Naive thymus-derived CD4-positive, alpha-beta T cell (primary cell): ENCODE measurements at regions of chr9 and their contacts with region 1.

Region 1: DNA sequence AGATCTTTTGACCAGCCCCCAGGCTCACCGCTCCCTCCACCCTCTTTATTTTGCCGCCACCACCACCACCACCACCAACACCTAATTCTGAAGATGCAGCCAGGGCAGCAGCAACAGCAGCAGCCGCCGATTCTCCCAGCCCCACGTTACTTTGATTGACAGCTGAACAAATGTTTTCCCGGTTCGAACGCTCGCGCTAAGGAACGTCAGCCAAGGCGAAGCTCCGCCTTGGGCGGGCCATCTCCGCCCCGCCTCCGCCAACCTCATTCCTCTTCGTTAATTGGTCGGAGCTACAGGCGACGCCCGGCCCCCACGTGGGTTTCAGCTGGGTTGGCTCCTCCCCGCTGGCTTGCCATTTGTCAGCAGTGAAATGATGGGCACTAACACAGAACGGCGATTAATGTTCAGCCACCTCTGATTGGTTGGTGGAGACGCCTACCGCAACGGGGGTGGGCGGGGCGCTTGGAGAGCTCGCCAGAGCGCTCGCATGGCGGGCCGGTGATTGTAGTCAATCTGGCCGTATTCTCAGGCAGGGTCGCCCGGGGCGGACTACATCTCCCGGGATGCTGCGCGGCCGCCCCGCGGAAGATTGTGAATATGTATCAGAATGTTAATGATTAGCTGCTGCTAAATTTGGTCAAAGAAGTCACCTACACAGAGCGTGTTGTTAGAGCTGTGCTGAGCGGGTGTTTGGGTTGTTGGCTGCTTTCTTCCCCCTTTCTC is at the start of gene TLE4:
- DNase-seq: peak; percentile 96 to 100 (median 100)
- ATAC-seq: peak; percentile 90
- H3K4me3 ChIP-seq: peak within 1 kb of the TSS; percentile 95
- H3K4me3 Mint-ChIP-seq: peak within 1 kb of the TSS in 7 of 10 donors; percentile 59 to 91 (median 78)
- H3K27ac ChIP-seq: peak within 1 kb of the TSS; percentile 87
- H3K27ac Mint-ChIP-seq: peak within 1 kb of the TSS in 4 of 9 donors; percentile 52 to 74 (median 68)
- H3K4me1 ChIP-seq: peaks cover 17 to 19% of the 10 kb centered on the region in 2 donors
- H3K4me1 Mint-ChIP-seq: peaks cover 22 to 40% (median 32%) of the 10 kb centered on the region in 7 donors
- H3K27me3 ChIP-seq: no peaks in the 10 kb centered on the region
- H3K27me3 Mint-ChIP-seq: peaks cover 0 to 34% (median 5%) of the 10 kb centered on the region in 5 donors
- total RNA-seq, gene TLE4: 21.0 to 196 (median 106) TPM

Region 2: DNA sequence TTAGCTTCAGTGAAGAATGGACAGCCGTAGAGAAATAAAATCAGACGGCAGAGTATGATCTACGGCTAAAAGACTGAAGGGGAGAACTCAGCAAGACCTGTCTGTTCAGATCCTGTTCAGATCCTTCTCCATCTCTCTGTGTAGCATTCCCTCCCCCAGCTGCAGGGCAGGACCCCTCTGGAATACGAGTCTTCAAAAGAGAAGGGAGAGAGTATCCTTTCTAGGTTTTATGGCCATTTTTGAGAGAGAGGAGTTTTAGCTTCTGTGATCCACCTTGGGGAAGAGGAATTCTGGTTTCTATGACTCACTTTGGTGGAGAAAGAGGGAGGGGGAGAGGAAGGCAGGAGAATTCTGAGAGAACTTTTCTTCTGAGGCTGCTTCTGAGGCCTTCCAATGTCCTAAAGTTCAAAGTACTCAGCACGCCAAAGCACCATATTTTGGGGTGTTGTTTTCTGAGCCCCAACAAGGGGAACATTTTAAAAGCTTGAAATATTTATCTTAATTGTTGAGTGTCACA is 194.1 kb before region 1 on chr9:
- CTCF ChIA-PET with region 1: no interaction called
- POLR2A ChIA-PET with region 1: no interaction called
- intact Hi-C with region 1: no loop called
- DNase-seq: no peak
- ATAC-seq: no peak
- H3K4me3 ChIP-seq: no peak overlapping the region
- H3K4me3 Mint-ChIP-seq: no peak overlapping the region
- H3K27ac ChIP-seq: no peak overlapping the region
- H3K27ac Mint-ChIP-seq: no peak overlapping the region
- H3K4me1 ChIP-seq: no peaks in the 10 kb centered on the region
- H3K4me1 Mint-ChIP-seq: no peaks in the 10 kb centered on the region
- H3K27me3 ChIP-seq: no peaks in the 10 kb centered on the region
- H3K27me3 Mint-ChIP-seq: peaks cover 2 to 21% (median 5%) of the 10 kb centered on the region in 5 donors

Region 3: DNA sequence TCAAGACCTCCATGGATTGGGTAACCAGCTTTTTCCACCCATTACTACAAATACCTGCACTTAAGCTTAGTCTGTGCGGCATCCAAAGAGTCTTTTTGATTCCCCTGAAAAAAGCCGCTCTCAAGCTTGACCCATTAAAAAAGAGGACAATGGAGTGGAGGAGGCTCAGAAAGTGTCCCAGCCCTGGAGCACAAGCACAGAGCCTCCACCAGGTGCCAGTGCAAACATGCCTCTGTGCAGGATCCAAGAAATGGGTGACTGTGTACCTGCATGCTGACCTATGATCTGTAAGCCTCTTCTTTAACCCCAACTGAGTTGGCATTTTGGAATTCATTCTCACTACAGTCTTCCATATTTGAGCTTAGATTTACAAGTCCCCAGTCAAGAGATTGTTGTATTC is 168.0 kb before region 1 on chr9:
- CTCF ChIA-PET with region 1: no interaction called
- POLR2A ChIA-PET with region 1: interaction called, 7 read pairs
- intact Hi-C with region 1: loop called in 1 of 2 experiments (anchors 5 kb)
- DNase-seq: peak in 3 of 9 donors; percentile 10 to 20 (median 14)
- ATAC-seq: no peak
- H3K4me3 ChIP-seq: no peak overlapping the region
- H3K4me3 Mint-ChIP-seq: no peak overlapping the region
- H3K27ac ChIP-seq: no peak overlapping the region
- H3K27ac Mint-ChIP-seq: no peak overlapping the region
- H3K4me1 ChIP-seq: no peaks in the 10 kb centered on the region
- H3K4me1 Mint-ChIP-seq: no peaks in the 10 kb centered on the region
- H3K27me3 ChIP-seq: no peaks in the 10 kb centered on the region
- H3K27me3 Mint-ChIP-seq: peaks cover 0 to 5% (median 0%) of the 10 kb centered on the region in 5 donors

Region 4: DNA sequence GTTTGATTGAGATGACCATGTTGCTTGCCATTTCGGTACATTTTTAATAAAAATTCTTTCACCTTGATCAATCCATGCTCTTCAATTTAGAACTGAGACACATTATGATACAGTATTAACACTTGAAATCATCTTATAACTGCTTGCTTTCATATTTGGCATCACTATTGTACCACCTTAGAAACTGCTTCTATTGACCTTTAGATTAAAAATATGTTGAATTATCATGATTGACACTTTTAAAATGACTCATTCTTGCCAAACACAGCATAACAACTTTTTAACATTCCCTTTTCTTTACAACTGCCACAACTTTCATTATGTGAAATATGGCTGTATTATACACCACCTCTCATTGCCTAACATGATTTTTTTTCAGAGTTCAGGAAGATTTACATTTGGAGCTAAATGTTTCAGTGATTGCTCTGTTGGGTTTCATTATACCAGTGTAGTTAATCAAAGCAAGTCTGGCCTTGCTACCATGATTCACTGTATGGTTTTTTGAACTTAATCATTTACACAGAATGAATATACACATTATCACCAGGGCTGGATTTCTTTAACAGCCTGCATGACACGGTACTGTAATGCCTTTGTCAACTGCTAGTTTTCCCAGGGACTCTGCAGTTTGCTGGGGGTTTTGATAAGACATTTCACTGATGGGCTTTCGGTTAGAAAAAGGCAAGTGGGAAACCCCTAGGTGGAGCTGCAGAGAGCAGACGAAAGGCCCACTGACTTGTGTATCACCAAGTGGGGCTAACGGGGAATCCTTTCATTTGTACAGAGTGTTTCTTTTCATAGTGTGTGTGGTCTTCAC is 93.3 kb before region 1 on chr9:
- CTCF ChIA-PET with region 1: no interaction called
- POLR2A ChIA-PET with region 1: interaction called, 4 read pairs
- intact Hi-C with region 1: loop called (anchors 1 to 5 kb)
- DNase-seq: peak in 6 of 9 donors; percentile 12 to 37 (median 22)
- ATAC-seq: peak; percentile 58
- H3K4me3 ChIP-seq: no peak overlapping the region
- H3K4me3 Mint-ChIP-seq: no peak overlapping the region
- H3K27ac ChIP-seq: no peak overlapping the region
- H3K27ac Mint-ChIP-seq: no peak overlapping the region
- H3K4me1 ChIP-seq: peaks cover 0 to 3% of the 10 kb centered on the region in 2 donors
- H3K4me1 Mint-ChIP-seq: peaks cover 0 to 5% (median 0%) of the 10 kb centered on the region in 7 donors
- H3K27me3 ChIP-seq: no peaks in the 10 kb centered on the region
- H3K27me3 Mint-ChIP-seq: no peaks in the 10 kb centered on the region

Region 5: DNA sequence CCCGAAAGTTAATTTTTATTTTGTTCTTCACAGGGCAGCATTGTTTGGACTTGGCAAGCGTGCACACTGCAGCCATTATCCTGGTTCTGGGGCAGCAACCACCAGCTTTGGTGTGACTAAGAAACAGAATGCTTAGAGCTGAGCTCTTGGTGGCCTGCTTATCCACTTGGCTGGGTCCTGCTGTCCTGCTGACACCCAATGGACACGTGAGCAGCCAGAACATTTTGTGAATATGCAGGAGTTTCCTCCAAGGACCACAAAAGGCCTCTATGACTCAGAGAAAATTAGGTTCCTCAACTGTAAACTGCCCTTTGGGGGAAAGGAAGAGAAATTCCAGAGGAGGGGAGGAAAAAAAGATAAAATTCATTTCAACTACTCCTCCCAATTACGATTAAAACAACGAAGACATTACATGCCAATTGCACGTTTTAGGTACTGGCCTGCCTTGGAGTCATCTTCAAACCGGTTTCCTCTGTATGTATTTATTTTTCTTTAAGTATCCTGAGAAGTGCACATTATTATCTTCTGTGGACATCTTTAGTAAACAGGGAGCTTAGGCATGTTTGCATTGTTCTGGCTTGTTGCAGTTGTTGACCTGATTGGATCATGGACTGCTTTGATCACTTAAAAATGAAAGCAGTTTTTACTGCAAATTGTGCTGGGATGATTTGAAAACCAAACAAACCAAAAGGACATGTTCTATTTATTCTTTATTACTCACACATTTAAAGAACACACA is 82.1 kb before region 1 on chr9:
- CTCF ChIA-PET with region 1: no interaction called
- POLR2A ChIA-PET with region 1: no interaction called
- intact Hi-C with region 1: no loop called
- DNase-seq: no peak
- ATAC-seq: no peak
- H3K4me3 ChIP-seq: no peak overlapping the region
- H3K4me3 Mint-ChIP-seq: no peak overlapping the region
- H3K27ac ChIP-seq: no peak overlapping the region
- H3K27ac Mint-ChIP-seq: no peak overlapping the region
- H3K4me1 ChIP-seq: no peaks in the 10 kb centered on the region
- H3K4me1 Mint-ChIP-seq: no peaks in the 10 kb centered on the region
- H3K27me3 ChIP-seq: no peaks in the 10 kb centered on the region
- H3K27me3 Mint-ChIP-seq: peaks cover 0 to 7% (median 4%) of the 10 kb centered on the region in 5 donors

Region 6: DNA sequence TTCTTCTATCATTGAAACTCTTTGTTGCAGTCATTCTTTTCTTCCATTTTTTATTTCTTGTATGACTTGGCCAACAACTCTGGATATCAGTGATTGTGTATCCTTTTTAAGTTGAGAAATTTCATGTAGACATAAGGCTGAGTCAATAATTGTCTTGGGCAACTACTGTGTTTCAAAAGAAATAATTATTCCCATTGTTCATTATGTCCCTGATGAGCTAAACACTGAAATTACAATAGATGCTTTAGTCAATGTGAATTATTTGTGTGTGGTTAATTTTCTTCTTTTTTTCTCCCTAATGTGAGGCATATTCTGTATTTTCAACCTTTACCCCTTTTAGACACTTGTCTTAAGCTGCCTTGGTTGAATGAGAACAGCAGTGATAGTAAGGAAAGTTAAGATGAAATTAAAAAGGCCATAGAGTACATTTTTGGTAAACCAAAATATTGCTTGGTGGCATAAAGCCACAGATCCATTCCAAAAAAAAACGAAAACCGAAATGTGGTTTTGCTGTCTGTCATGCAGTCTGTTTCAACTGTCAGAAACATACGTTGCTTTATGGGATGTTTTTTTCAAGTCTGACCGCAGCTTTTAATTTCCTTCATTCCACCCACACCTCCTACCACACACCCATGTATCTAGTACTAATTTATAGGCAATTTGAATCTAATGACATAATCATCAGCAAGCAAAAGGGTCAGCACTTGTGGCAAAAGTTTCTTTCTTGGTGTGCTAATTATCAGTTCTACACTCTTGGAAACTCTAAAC is 21.4 kb after region 1 on chr9:
- CTCF ChIA-PET with region 1: interaction called, 4 read pairs
- POLR2A ChIA-PET with region 1: interaction called, 10 read pairs
- intact Hi-C with region 1: loop called in 1 of 2 experiments (anchors 1 kb)
- DNase-seq: peak in 7 of 9 donors; percentile 26 to 65 (median 59)
- ATAC-seq: peak; percentile 80
- H3K4me3 ChIP-seq: no peak overlapping the region
- H3K4me3 Mint-ChIP-seq: peak overlapping the region in 9 of 10 donors; percentile 45 to 78 (median 69)
- H3K27ac ChIP-seq: no peak overlapping the region
- H3K27ac Mint-ChIP-seq: peak overlapping the region in 6 of 9 donors; percentile 28 to 76 (median 58)
- H3K4me1 ChIP-seq: peaks cover 14 to 20% of the 10 kb centered on the region in 2 donors
- H3K4me1 Mint-ChIP-seq: peaks cover 50 to 89% (median 86%) of the 10 kb centered on the region in 7 donors
- H3K27me3 ChIP-seq: no peaks in the 10 kb centered on the region
- H3K27me3 Mint-ChIP-seq: peaks cover 0 to 33% (median 0%) of the 10 kb centered on the region in 5 donors

Region 7: GRCh38 chr9:79686381-79687130 is 115.1 kb after region 1 on chr9:
- CTCF ChIA-PET with region 1: no interaction called
- POLR2A ChIA-PET with region 1: interaction called, 5 read pairs
- intact Hi-C with region 1: loop called in 1 of 2 experiments (anchors 1 kb)
- DNase-seq: no peak
- ATAC-seq: no peak
- H3K4me3 ChIP-seq: no peak overlapping the region
- H3K4me3 Mint-ChIP-seq: peak overlapping the region in 4 of 10 donors; percentile 9 to 54 (median 30)
- H3K27ac ChIP-seq: no peak overlapping the region
- H3K27ac Mint-ChIP-seq: peak overlapping the region in 7 of 9 donors; percentile 1 to 82 (median 35)
- H3K4me1 ChIP-seq: peaks cover 6 to 12% of the 10 kb centered on the region in 2 donors
- H3K4me1 Mint-ChIP-seq: peaks cover 20 to 91% (median 67%) of the 10 kb centered on the region in 7 donors
- H3K27me3 ChIP-seq: no peaks in the 10 kb centered on the region
- H3K27me3 Mint-ChIP-seq: no peaks in the 10 kb centered on the region

Region 8: DNA sequence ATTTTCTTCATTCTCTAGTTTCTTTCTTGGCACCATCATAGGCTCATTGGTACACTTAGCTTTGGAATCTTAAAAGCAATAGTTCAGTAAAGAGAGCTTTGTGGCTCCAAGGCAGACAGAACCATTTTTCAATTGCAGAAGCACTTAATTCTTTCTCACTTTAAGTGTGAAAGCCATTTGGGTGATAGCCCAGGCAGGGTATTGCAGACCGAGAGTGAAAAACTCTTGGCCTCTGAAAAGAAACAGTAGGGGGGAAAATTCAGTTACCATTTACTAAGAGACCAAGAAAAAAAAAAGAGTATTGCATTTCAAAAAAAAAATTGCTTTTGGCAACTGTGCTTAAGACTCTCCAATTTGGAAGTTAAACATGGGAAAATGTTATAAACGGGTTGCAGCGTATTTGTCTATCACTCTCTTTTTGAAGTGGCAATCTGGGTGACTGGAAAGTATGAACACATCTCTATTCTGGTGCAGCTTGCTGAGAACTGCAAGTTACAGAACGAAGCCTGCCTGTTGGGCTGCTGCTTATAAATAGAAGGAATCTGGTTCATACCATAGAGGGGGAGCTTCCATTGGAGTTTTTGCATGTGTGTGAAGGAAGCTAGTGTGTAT is 170.7 kb after region 1 on chr9:
- CTCF ChIA-PET with region 1: no interaction called
- POLR2A ChIA-PET with region 1: no interaction called
- intact Hi-C with region 1: no loop called
- DNase-seq: no peak
- ATAC-seq: no peak
- H3K4me3 ChIP-seq: no peak overlapping the region
- H3K4me3 Mint-ChIP-seq: no peak overlapping the region
- H3K27ac ChIP-seq: no peak overlapping the region
- H3K27ac Mint-ChIP-seq: no peak overlapping the region
- H3K4me1 ChIP-seq: no peaks in the 10 kb centered on the region
- H3K4me1 Mint-ChIP-seq: no peaks in the 10 kb centered on the region
- H3K27me3 ChIP-seq: no peaks in the 10 kb centered on the region
- H3K27me3 Mint-ChIP-seq: peaks cover 0 to 3% (median 0%) of the 10 kb centered on the region in 5 donors

Region 9: DNA sequence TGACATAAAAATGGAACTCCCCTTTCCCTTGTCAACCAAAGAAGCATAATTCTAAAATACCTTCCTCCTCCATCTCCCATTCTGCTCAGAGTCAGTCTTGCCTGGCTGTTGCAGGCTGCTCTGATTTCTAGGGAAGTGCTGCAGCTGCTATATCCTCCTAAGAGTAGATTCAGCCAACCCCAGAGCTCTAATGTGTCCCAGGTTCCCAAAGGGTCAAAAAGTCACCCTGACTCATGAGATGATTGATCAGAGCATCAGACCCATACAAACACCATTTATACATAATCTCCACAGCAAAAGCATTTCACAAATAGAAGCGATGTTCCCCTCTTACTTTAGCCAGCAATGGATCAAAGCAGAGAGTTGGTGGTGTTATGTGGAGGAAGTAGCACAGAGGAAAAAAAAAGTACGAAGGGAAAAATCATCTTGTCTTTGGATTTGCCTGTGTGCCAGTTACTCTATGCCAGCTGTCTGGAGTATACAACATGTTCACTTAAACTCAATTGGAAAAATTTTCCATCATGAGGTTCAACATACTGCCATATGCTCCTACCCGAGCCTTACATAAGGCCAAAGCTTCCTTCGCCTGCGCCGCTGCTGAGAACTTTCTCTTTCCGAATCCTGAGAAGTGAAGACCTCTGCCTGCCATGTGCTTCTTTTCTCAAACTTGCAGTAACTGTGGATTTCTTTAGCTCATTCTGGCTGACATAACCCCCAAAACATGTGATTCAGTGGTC is 258.3 kb after region 1 on chr9:
- CTCF ChIA-PET with region 1: no interaction called
- POLR2A ChIA-PET with region 1: no interaction called
- intact Hi-C with region 1: no loop called
- DNase-seq: no peak
- ATAC-seq: no peak
- H3K4me3 ChIP-seq: no peak overlapping the region
- H3K4me3 Mint-ChIP-seq: no peak overlapping the region
- H3K27ac ChIP-seq: no peak overlapping the region
- H3K27ac Mint-ChIP-seq: no peak overlapping the region
- H3K4me1 ChIP-seq: no peaks in the 10 kb centered on the region
- H3K4me1 Mint-ChIP-seq: peaks cover 0 to 2% (median 0%) of the 10 kb centered on the region in 7 donors
- H3K27me3 ChIP-seq: no peaks in the 10 kb centered on the region
- H3K27me3 Mint-ChIP-seq: peaks cover 0 to 3% (median 0%) of the 10 kb centered on the region in 5 donors

Region 10: GRCh38 chr9:79883073-79883645 is 311.7 kb after region 1 on chr9:
- CTCF ChIA-PET with region 1: no interaction called
- POLR2A ChIA-PET with region 1: interaction called, 3 read pairs
- intact Hi-C with region 1: loop called in 1 of 2 experiments (anchors 1 kb)
- DNase-seq: peak in 7 of 9 donors; percentile 10 to 63 (median 60)
- ATAC-seq: peak; percentile 88
- H3K4me3 ChIP-seq: peak overlapping the region; percentile 24
- H3K4me3 Mint-ChIP-seq: peak overlapping the region; percentile 45 to 84 (median 79)
- H3K27ac ChIP-seq: no peak overlapping the region
- H3K27ac Mint-ChIP-seq: peak overlapping the region in 7 of 9 donors; percentile 26 to 84 (median 57)
- H3K4me1 ChIP-seq: peaks cover 29 to 30% of the 10 kb centered on the region in 2 donors
- H3K4me1 Mint-ChIP-seq: peaks cover 35 to 80% (median 74%) of the 10 kb centered on the region in 7 donors
- H3K27me3 ChIP-seq: no peaks in the 10 kb centered on the region
- H3K27me3 Mint-ChIP-seq: peaks cover 0 to 2% (median 0%) of the 10 kb centered on the region in 5 donors